ENCODE measurements at regions of chr17 and their contacts with region 1.

Region 1: DNA sequence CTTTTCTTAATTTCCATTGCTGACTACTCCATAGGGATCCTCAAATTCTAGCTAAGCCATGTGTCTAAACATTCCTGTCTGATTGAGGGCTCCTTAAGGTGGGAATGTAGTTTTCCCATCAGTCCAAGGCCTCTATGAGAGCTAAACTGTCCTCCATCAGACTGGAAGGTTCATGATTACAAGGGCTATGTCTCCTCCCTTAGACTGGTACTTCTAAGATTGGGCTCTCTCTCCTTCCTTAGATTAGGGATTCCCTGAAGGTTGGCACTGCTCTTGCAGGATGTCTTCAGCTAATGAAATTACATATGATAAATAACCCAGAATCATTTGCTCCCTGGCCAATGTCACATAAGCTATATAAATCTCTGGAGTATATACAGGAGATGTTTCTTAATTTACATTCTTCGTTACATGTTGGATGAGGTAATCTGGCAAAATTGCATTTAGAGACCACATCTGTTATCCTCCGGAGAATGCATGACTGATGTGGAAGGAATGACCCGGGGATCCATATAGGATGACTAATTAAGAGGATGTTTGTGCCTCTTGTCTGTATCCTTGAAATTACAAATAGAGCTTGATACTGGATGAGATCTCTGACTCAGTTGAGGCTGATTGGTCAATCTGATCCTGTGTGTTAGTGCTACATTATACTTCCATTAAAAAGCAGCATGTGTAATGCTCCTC is 14.2 kb downstream of the B4GALNT2 start:
- DNase-seq: peak; percentile 98
- H3K4me3 ChIP-seq: no peak overlapping the region
- H3K27ac ChIP-seq: peak overlapping the region; percentile 91
- H3K27me3 ChIP-seq: peaks cover 2% of the 10 kb centered on the region
- CTCF ChIP-seq: no peak

Region 2: DNA sequence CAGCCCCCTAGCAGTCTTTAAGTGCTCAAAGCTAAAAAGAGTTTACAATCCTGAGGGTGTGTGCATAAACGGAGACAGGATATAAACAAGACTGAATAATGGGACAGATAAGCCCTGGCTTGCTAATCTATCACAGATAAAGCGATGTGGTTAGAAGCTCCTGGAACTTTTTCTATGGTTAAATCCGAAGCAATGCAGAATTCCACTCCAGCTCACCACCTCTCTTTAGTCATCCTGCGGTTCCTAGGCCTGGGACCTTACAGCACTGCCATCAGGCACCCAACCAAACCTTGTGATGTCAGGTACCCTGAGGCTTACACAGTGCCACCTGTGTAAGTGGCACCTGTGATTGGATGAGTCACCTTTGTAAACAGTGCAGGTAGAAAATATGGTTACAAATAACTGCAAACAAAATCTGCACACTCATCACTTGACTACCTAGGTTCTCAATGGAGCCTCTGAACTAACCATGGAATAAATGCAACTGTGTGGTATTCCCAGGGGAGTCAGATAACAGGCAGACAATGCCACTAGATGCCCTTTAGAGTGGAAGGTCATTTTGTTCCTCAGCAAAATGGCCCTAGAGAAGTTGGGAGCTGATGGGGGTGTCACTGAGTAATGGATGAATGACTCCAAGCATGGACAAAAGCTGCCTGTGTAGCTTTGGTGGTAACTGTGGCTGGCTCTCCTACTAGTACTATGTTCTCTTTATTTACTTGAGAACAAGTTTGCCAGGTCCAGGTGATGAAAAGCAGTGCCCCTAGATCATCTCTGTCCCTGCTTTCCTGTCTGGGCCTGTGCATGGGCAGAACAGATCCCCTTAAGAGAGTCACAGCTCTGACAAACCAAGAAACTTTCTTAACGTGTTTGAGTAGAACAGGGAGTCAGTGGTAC is 45.5 kb before region 1 on chr17:
- CTCF ChIA-PET with region 1: no interaction called
- POLR2A ChIA-PET with region 1: interaction called, 20 read pairs
- DNase-seq: no peak
- H3K4me3 ChIP-seq: no peak overlapping the region
- H3K27ac ChIP-seq: peak overlapping the region; percentile 39
- H3K27me3 ChIP-seq: no peaks in the 10 kb centered on the region
- CTCF ChIP-seq: no peak

Region 3: DNA sequence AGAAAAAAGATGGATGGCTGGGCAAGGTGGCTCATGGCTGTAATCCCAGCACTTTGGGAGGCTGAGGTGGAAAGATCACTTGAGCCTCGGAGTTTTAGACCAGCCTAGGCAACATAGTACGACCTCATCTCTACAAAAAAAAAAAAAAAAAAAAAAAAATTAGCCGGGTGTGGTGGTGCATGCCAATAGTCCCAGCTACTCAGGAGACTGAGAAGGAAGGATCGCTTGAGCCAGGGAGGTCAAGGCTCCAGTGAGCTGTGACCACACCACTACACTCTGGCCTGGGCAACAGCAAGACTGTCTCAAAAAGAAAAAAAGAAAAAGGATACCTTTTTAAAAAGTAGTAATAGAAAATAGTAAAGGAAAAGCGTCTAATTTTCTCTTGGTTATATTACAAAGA is 194.6 kb after region 1 on chr17:
- CTCF ChIA-PET with region 1: no interaction called
- POLR2A ChIA-PET with region 1: interaction called, 12 read pairs
- DNase-seq: no peak
- H3K4me3 ChIP-seq: no peak overlapping the region
- H3K27ac ChIP-seq: no peak overlapping the region
- H3K27me3 ChIP-seq: no peaks in the 10 kb centered on the region
- CTCF ChIP-seq: no peak